ENCODE measurements at regions of chr10 and their contacts with region 1.

Region 1: DNA sequence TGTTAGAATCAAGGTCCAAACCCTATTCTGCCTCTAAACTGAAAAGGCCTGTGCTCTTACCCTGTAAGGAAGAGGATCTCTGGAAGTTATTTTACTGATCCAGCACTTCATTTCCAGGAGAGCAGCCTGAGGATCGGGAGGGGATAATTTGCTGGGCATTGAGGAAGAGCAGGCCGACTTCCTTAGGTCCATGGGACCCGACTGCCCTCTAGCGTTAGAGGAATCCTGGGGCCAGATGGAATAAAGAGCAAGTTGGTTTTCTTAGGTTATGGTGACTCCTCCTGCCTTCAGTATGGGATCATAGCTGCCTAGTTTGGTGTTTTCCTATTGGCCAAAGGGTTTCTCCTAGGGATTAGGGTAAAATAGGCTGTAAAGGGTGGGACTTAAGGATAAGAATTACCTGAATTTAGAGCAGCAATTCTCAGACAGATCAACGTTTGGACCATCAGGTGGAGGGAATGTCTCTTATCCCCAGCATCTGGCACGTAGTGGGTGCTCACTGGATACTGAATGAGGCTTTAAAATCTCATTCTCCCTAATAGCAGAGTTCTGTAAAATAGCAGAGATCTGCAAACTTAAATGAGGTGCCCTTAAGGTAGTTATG is 40.0 kb upstream of the SORBS1 start:
- DNase-seq: peak; percentile 89
- H3K4me3 ChIP-seq: no peak overlapping the region
- H3K27ac ChIP-seq: no peak overlapping the region
- H3K4me1 ChIP-seq: no peaks in the 10 kb centered on the region
- H3K27me3 ChIP-seq: peaks cover 0 to 7% of the 10 kb centered on the region in 2 experiments
- CTCF ChIP-seq: peak; percentile 90 to 96
- POLR2A ChIP-seq: no peak

Region 2: DNA sequence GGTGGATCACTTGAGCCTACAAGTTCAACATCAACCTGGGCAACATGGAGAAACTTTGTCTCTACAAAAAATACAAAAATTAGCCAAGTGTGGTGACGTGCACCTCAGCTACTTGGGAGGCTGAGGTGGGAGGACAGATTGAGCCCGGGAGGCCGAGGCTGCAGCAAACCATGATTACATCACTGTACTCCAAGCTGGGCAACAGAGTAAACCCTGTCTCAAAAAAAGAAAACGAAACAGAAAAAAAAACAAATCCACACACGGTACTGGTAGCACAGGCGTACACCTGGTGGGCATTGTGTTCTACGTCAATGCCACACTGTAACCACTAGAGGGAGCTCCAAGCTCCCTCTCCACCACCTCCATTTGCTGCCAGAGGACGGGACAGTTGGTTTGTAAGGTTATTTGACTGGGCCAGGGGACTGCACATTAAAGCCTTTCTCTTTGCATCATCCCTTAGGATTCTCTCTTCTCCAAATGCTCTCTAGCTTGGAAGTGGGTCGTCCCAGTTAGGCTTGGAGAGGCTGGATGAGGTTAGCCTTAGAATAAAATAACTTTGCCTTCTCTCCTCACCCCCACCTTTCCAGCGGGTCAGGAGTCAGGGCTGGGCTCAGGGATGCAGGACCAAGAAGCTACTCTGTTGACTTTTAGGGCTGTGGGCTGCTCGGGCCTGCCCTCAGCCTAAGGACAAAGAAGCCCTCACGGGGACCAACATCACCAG is 170.8 kb before region 1 on chr10:
- CTCF ChIA-PET with region 1: interaction called, 314 read pairs
- POLR2A ChIA-PET with region 1: interaction called, 4 read pairs
- dilution Hi-C with region 1: no loop called
- intact Hi-C with region 1: loop called (anchors 1 kb)
- DNase-seq: peak; percentile 61
- H3K4me3 ChIP-seq: no peak overlapping the region
- H3K27ac ChIP-seq: no peak overlapping the region
- H3K4me1 ChIP-seq: peaks cover 5% of the 10 kb centered on the region
- H3K27me3 ChIP-seq: peaks cover 0 to 2% of the 10 kb centered on the region in 2 experiments
- CTCF ChIP-seq: peak; percentile 89 to 95
- POLR2A ChIP-seq: no peak

Measured in endothelial cell of umbilical vein (primary cell).